ENCODE measurements at regions of chr7 and their contacts with region 1.

Region 1: DNA sequence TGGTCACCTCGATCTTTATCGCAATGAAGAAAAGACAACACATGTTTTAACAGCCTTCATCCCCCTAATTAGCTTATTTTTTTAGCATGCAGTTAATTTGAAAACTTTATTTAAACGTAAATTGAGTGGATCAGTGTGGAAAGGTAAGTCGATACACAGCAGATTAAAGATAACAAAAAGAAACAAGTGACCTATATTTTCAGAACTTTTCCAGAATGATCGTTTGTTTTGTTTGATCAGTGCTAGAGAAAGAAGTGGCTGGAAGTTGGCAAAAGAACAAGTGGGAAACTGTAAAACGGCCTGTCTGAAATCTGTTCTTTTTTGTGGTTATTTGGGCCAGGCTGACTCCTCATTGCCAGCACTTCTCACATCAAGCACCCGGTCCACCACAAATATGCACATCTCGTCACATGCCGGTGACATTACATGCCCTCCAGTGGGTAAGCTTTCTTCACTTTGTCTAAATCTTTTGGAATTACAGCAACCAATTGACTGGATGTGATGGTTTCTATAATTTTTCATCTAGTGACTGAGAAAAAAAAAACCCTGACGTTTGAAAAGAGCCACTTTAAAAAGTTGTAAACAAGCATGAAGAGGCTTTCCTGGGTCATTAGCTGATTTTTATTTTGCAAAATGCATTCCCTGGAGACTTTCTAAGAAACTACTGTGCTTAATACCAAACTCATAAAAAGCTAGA is 33.2 kb downstream of the C7orf33 start:
- DNase-seq: no peak
- H3K4me3 ChIP-seq: no peak overlapping the region
- H3K27ac ChIP-seq: no peak overlapping the region
- H3K4me1 ChIP-seq: peaks cover 0 to 7% (median 3%) of the 10 kb centered on the region in 4 experiments; a peak in 3 of 7 replicates
- H3K27me3 ChIP-seq: no peaks in the 10 kb centered on the region
- CTCF ChIP-seq: no peak
- EP300 ChIP-seq: no peak
- POLR2A ChIP-seq: no peak
- RAD21 ChIP-seq: no peak

Region 2: GRCh38 chr7:148575640-148576411 is 47.9 kb before region 1 on chr7:
- CTCF ChIA-PET with region 1: interaction called, 11 read pairs
- POLR2A ChIA-PET with region 1: no interaction called
- DNase-seq: peak in 1 of 2 experiments; percentile 89
- H3K4me3 ChIP-seq: no peak overlapping the region
- H3K27ac ChIP-seq: no peak overlapping the region
- H3K4me1 ChIP-seq: no peaks in the 10 kb centered on the region
- H3K27me3 ChIP-seq: no peaks in the 10 kb centered on the region
- CTCF ChIP-seq: peak; percentile 76 to 88 (median 88)
- EP300 ChIP-seq: no peak
- POLR2A ChIP-seq: no peak
- RAD21 ChIP-seq: peak; percentile 86 to 91

Region 3: GRCh38 chr7:148611692-148612091 is 12.0 kb before region 1 on chr7:
- CTCF ChIA-PET with region 1: interaction called, 26 read pairs
- POLR2A ChIA-PET with region 1: interaction called, 6 read pairs
- DNase-seq: peak; percentile 33 to 66
- H3K4me3 ChIP-seq: no peak overlapping the region
- H3K27ac ChIP-seq: no peak overlapping the region
- H3K4me1 ChIP-seq: peaks cover 1 to 7% (median 4%) of the 10 kb centered on the region in 4 experiments; a peak in 4 of 7 replicates
- H3K27me3 ChIP-seq: no peaks in the 10 kb centered on the region
- CTCF ChIP-seq: peak; percentile 61 to 79 (median 78)
- EP300 ChIP-seq: no peak
- POLR2A ChIP-seq: no peak
- RAD21 ChIP-seq: peak; percentile 59 to 73